Heart right ventricle (tissue), 16 donors: ENCODE measurements at regions of chr6 and their contacts with region 1.

Region 1: DNA sequence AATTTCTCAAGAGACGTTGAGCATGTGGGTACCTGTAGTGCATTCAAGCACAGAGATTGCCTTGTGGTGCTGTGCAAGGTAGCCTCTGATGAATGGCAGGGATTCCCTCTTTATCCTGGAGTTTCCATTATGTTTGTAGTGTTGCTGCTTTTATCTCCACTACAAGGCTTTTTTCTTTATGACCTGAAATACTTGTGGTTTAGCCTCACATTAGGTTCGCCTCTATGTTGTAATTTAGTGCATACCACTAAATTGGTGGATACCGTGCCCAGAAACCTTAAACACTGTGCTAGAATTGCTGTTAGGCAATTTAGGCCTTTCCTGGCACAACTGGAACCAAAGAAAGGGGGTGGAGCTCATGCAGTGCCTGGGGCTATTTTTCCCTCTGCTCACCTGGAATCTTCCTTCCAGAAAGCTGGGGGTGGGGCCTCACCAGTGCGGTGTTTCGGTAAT is 76.7 kb downstream of the NCOA7 start:
- DNase-seq: no peak
- ATAC-seq: no peak
- H3K4me3 ChIP-seq: no peak overlapping the region
- H3K27ac ChIP-seq: no peak overlapping the region
- H3K4me1 ChIP-seq: peaks cover 0 to 22% (median 5%) of the 10 kb centered on the region in 9 donors
- H3K27me3 ChIP-seq: no peaks in the 10 kb centered on the region
- CTCF ChIP-seq: no peak

Region 2: GRCh38 chr6:125773387-125774341 is 93.8 kb before region 1 on chr6:
- intact Hi-C with region 1: no loop called
- DNase-seq: no peak
- ATAC-seq: peak in 2 of 8 donors; percentile 46 to 47
- H3K4me3 ChIP-seq: no peak overlapping the region
- H3K27ac ChIP-seq: no peak overlapping the region
- H3K4me1 ChIP-seq: no peaks in the 10 kb centered on the region
- H3K27me3 ChIP-seq: no peaks in the 10 kb centered on the region
- CTCF ChIP-seq: no peak

Region 3: GRCh38 chr6:125844989-125845388 is 22.5 kb before region 1 on chr6:
- intact Hi-C with region 1: no loop called
- DNase-seq: peak in 1 of 2 donors; percentile 65
- ATAC-seq: peak; percentile 86 to 92 (median 90)
- H3K4me3 ChIP-seq: peak overlapping the region in 1 of 10 donors; percentile 0
- H3K27ac ChIP-seq: peak overlapping the region in 9 of 10 donors; percentile 11 to 68 (median 51)
- H3K4me1 ChIP-seq: peaks cover 2 to 39% (median 31%) of the 10 kb centered on the region in 9 donors
- H3K27me3 ChIP-seq: no peaks in the 10 kb centered on the region
- CTCF ChIP-seq: no peak

Region 4: DNA sequence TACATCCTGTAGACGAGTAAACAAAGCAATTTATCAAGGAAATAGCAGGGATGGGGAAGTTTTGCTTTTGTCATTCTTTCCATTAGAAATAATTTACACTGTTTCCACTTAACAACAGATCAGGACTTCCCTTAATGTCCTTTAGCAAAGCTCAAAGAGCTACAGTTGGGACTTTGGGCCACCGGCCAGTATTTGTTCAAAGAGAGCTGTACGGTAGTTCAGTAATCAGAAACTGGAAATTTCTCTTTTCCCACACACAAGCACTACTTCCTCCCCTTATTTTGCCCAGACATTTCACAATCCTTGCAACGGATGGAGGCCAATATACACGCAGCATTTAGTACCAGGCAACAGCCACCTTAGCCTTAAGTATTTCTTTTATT is 76.9 kb after region 1 on chr6:
- intact Hi-C with region 1: loop called in 1 of 10 experiments (anchors 10 kb)
- DNase-seq: peak; percentile 51 to 74
- ATAC-seq: peak; percentile 73 to 89 (median 83)
- H3K4me3 ChIP-seq: no peak overlapping the region
- H3K27ac ChIP-seq: peak overlapping the region in 7 of 10 donors; percentile 14 to 72 (median 50)
- H3K4me1 ChIP-seq: peaks cover 0 to 56% (median 18%) of the 10 kb centered on the region in 9 donors
- H3K27me3 ChIP-seq: peaks cover 0 to 4% (median 0%) of the 10 kb centered on the region in 7 donors
- CTCF ChIP-seq: no peak